Activated CD4-positive, alpha-beta memory T cell treated with anti-CD3 and anti-CD28 coated beads, Interleukin-2, amount 10 ng/mL, durations not matched to agents 7 days and 5 days (primary cell): ENCODE measurements at regions of chr17 and their contacts with region 1.

Region 1: DNA sequence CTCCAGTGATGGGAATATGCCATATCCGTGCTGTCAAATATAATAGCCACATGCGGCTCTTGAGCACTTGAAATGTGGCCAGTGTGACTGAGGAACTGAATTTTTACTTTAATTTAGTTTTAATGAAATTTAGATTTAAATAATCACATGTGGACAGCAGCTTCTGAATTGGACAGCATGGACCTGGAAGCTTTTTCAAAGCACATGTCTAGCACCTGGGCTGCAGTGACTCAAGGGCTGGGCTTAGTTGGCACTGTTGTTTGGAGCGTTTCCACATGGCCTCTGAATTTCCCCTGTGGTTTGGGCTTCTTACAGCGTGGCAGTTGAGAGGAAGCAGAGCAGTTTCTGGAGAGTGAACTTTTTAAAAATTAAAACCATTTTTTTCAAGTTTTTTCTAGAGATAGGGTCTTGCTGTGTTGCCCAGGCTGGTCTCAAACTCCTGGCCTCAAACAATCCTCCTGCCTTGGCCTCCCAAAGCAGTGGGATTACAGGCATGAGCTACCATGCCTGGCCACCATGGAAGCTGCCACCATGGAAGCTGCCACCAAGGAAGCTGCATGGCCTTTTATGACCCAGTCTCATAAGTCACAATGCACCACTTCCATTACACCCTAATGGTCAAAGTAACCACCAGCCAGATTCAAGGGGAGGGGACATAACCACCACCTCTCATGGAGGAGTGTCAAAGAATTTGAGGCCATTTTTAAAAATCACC is 6.7 kb upstream of the TOB1 start:
- DNase-seq: peak; percentile 63
- H3K4me3 Mint-ChIP-seq: no peak overlapping the region
- H3K27ac Mint-ChIP-seq: peak overlapping the region; percentile 51
- H3K4me1 Mint-ChIP-seq: peaks cover 54% of the 10 kb centered on the region
- H3K27me3 Mint-ChIP-seq: peaks cover 12% of the 10 kb centered on the region

Region 2: GRCh38 chr17:50765454-50766221 is 107.2 kb before region 1 on chr17:
- CTCF ChIA-PET with region 1: no interaction called
- POLR2A ChIA-PET with region 1: no interaction called
- DNase-seq: no peak
- H3K4me3 Mint-ChIP-seq: no peak overlapping the region
- H3K27ac Mint-ChIP-seq: no peak overlapping the region
- H3K4me1 Mint-ChIP-seq: peaks cover 18% of the 10 kb centered on the region
- H3K27me3 Mint-ChIP-seq: peaks cover 37% of the 10 kb centered on the region

Region 3: GRCh38 chr17:50883850-50884438 is 11.1 kb after region 1 on chr17:
- CTCF ChIA-PET with region 1: interaction called, 4 read pairs
- POLR2A ChIA-PET with region 1: interaction called, 53 read pairs
- DNase-seq: no peak
- H3K4me3 Mint-ChIP-seq: no peak overlapping the region
- H3K27ac Mint-ChIP-seq: no peak overlapping the region
- H3K4me1 Mint-ChIP-seq: peaks cover 39% of the 10 kb centered on the region
- H3K27me3 Mint-ChIP-seq: peaks cover 2% of the 10 kb centered on the region